Breast epithelium (tissue), 4 donors: ENCODE measurements at regions of chr4 and their contacts with region 1.

Region 1: GRCh38 chr4:110042545-110043517 is 130.1 kb downstream of the EGF start:
- DNase-seq: no peak
- H3K4me3 ChIP-seq: no peak overlapping the region
- H3K27ac ChIP-seq: no peak overlapping the region
- H3K4me1 ChIP-seq: no peaks in the 10 kb centered on the region
- H3K27me3 ChIP-seq: no peaks in the 10 kb centered on the region
- CTCF ChIP-seq: no peak
- POLR2A ChIP-seq: no peak

Region 2: GRCh38 chr4:110005461-110006056 is 37.3 kb before region 1 on chr4:
- intact Hi-C with region 1: no loop called
- DNase-seq: no peak
- H3K4me3 ChIP-seq: no peak overlapping the region
- H3K27ac ChIP-seq: no peak overlapping the region
- H3K4me1 ChIP-seq: no peaks in the 10 kb centered on the region
- H3K27me3 ChIP-seq: no peaks in the 10 kb centered on the region
- CTCF ChIP-seq: peak in 2 of 3 donors; percentile 45 to 61
- POLR2A ChIP-seq: no peak

Region 3: GRCh38 chr4:110071466-110071865 is 28.6 kb after region 1 on chr4:
- intact Hi-C with region 1: no loop called
- DNase-seq: no peak
- H3K4me3 ChIP-seq: no peak overlapping the region
- H3K27ac ChIP-seq: no peak overlapping the region
- H3K4me1 ChIP-seq: no peaks in the 10 kb centered on the region
- H3K27me3 ChIP-seq: no peaks in the 10 kb centered on the region
- CTCF ChIP-seq: no peak
- POLR2A ChIP-seq: no peak

Region 4: DNA sequence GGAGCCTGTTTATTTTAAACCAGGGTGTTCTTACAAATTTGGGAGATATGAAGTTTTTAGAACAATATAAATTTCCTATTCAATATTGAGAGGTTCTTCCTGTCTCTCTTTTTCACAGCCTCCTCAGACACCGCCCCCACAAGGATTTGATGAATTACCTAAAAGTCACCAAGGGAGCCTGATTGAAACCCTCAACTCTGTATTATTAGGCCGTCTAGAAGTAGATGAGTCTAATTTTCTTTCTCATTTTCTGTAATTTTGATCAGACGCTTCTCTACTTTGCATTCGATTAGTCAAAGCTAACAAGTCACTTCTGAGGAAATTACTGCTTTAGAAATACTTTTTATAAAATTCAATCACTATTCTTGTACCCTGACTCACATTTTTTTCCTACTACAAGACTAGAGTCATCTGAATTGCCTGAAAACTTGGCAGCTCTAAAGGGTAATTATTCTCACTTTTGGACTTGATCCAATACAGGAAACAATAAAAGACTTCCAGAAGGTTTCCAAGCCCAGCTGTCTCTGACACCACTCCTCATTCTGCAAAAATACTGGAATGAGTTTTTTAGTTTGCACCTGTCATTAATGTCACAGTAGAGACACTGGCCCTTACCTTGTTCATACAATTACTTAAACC is 44.4 kb after region 1 on chr4:
- intact Hi-C with region 1: no loop called
- DNase-seq: no peak
- H3K4me3 ChIP-seq: no peak overlapping the region
- H3K27ac ChIP-seq: no peak overlapping the region
- H3K4me1 ChIP-seq: no peaks in the 10 kb centered on the region
- H3K27me3 ChIP-seq: no peaks in the 10 kb centered on the region
- CTCF ChIP-seq: no peak
- POLR2A ChIP-seq: no peak

Region 5: GRCh38 chr4:110211007-110211769 is 168.4 kb after region 1 on chr4:
- intact Hi-C with region 1: loop called (anchors 5 kb)
- DNase-seq: no peak
- H3K4me3 ChIP-seq: no peak overlapping the region
- H3K27ac ChIP-seq: no peak overlapping the region
- H3K4me1 ChIP-seq: no peaks in the 10 kb centered on the region
- H3K27me3 ChIP-seq: no peaks in the 10 kb centered on the region
- CTCF ChIP-seq: peak; percentile 24 to 56 (median 51)
- POLR2A ChIP-seq: no peak